ENCODE measurements at regions of chr1 and their contacts with region 1.

Region 1: DNA sequence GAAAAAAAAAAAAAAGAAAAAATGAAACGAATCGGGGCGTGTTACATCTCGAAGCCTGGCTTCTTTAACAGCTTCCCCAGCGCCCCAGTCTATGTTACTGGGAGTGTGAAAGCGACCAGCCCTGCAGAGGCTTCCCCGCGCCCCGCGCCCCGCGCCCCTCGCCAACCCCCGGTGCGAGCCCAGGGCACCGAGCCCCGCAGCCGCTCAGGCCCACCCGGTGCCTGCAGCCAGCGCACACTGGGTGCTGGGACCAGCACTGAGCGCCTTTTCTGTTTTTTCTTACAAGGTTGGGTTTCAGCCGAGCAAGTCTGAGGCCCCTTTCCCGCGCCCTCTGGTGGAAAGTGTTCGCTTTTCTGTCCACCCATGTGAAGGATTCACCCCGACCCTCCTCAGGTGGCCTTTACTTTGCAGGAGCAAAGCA is 42.1 kb upstream of the ZNF496 start:
- DNase-seq: peak; percentile 76
- H3K4me3 Mint-ChIP-seq: no peak overlapping the region
- H3K27ac Mint-ChIP-seq: no peak overlapping the region
- H3K4me1 Mint-ChIP-seq: peaks cover 7% of the 10 kb centered on the region
- H3K27me3 Mint-ChIP-seq: peaks cover 9% of the 10 kb centered on the region

Region 2: GRCh38 chr1:247487057-247487456 is 113.3 kb after region 1 on chr1:
- CTCF ChIA-PET with region 1: interaction called, 37 read pairs
- DNase-seq: peak; percentile 47
- H3K4me3 Mint-ChIP-seq: no peak overlapping the region
- H3K27ac Mint-ChIP-seq: peak overlapping the region; percentile 1
- H3K4me1 Mint-ChIP-seq: no peaks in the 10 kb centered on the region
- H3K27me3 Mint-ChIP-seq: peaks cover 15% of the 10 kb centered on the region